ENCODE measurements at regions of chr1 and their contacts with region 1.

Region 1: GRCh38 chr1:226062558-226063223 is at the start of gene H3-3A:
- DNase-seq: peak; percentile 97
- ATAC-seq: peak; percentile 87
- H3K4me3 Mint-ChIP-seq: peak within 1 kb of the TSS; percentile 99
- H3K27ac Mint-ChIP-seq: peak within 1 kb of the TSS; percentile 100
- H3K4me1 Mint-ChIP-seq: peaks cover 33% of the 10 kb centered on the region
- H3K27me3 Mint-ChIP-seq: no peaks in the 10 kb centered on the region
- total RNA-seq, gene H3-3A: 384 to 451 TPM

Region 2: DNA sequence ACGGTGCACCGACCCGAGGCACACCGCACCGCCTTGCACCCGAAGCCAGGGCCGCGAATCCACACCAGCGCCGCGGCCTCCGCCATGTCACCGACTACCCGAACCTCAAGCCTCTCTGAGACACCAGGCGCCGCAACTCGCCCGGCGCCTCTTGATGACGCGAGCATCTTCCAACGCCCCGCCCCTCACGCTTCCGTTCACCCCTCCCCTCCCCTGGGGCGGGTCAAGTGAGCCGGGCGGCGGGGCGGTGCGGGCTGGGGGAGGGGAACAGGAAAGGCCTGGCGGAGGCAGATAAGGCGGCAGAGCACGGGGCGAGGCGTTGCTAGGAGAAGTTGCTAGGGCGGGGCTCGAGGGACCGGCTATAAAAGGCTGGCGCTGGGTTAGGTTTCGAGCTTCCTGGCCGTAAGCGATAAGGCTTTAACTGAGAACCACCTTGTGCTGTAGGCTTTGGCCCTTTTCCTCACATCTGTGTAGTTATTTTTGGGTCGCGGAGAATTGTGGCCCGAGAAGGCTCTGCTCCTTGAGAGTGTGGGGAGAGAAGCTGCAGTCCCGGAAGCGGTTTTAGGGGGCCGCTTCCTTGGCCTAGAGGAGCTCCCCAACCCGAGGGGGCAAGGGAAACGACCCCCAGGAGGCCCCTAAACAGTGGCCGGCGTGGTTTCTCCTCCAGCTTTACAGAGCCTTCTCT is 63.3 kb before region 1 on chr1 and contains the start of gene SDE2:
- CTCF ChIA-PET with region 1: interaction called, 12 read pairs
- DNase-seq: peak; percentile 100
- ATAC-seq: peak; percentile 89
- H3K4me3 Mint-ChIP-seq: peak within 1 kb of the TSS; percentile 98
- H3K27ac Mint-ChIP-seq: peak within 1 kb of the TSS; percentile 100
- H3K4me1 Mint-ChIP-seq: peaks cover 66% of the 10 kb centered on the region
- H3K27me3 Mint-ChIP-seq: no peaks in the 10 kb centered on the region
- total RNA-seq, gene SDE2: 16.6 to 20.9 TPM

Region 3: DNA sequence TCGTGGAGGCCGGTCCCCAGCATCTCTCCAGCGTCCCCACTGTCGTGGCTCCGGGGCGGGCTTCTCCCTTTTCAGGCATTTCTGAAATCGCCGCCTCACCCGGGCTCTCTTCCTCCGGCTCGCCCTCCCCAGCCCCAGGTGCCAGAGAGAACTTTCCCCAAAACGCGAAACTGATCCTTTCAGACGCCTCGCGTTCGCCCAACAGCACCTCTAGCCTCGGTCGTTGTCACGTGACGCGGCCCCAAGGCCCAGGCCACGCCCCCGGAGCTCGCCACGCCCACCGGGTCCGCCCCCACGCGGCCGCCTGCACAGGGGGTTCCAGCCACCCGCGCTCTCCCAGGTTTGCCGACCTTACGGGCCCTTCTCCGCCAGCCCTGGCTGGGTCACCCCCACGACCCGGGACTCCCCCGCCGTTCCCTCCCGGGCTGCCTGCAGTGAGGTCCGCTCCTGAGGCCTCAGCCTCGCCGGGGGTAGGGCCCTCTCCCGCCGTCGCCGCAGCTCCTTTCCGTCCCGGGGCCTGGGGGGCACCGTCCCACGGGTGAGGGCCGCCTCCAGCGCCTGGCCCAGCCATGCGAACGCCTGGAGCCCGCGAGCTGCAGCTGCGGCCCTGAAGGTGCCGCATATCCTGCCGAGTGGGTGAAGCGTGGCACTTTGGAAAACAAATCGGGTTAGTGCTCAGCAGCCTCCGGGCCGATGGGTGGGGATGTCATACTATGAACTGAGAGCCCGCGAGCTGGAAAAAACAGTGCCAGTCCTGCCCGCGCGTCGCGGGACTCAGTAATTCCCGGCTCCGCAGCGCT is 20.8 kb after region 1 on chr1:
- CTCF ChIA-PET with region 1: interaction called, 83 read pairs
- DNase-seq: peak; percentile 93
- ATAC-seq: peak; percentile 96
- H3K4me3 Mint-ChIP-seq: peak overlapping the region; percentile 75
- H3K27ac Mint-ChIP-seq: peak overlapping the region; percentile 66
- H3K4me1 Mint-ChIP-seq: peaks cover 9% of the 10 kb centered on the region
- H3K27me3 Mint-ChIP-seq: peaks cover 12% of the 10 kb centered on the region

Region 4: GRCh38 chr1:226109829-226110248 is 47.1 kb after region 1 on chr1:
- CTCF ChIA-PET with region 1: interaction called, 35 read pairs
- DNase-seq: peak; percentile 88
- ATAC-seq: peak; percentile 87
- H3K4me3 Mint-ChIP-seq: peak overlapping the region; percentile 78
- H3K27ac Mint-ChIP-seq: peak overlapping the region; percentile 73
- H3K4me1 Mint-ChIP-seq: peaks cover 13% of the 10 kb centered on the region
- H3K27me3 Mint-ChIP-seq: no peaks in the 10 kb centered on the region

Region 5: DNA sequence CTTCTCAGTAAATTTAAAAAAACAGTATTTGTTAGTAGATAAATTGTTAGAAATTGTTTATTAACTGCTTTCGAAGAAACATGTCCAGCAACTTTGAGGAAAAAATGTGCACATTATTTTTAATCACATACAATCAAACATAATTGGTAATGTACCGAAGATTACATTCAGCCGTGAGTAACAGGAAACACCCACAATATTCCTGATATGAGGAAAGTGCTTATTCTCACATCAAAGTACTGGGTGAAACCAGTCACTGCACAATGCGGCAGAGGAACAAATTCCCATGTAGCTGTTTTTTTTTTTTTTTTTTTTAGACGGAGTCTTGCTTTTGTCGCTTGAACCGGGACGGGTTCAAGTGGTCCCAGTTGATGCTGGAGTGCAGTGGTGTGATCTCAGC is 114.2 kb after region 1 on chr1:
- CTCF ChIA-PET with region 1: no interaction called
- DNase-seq: no peak
- ATAC-seq: no peak
- H3K4me3 Mint-ChIP-seq: no peak overlapping the region
- H3K27ac Mint-ChIP-seq: no peak overlapping the region
- H3K4me1 Mint-ChIP-seq: peaks cover 22% of the 10 kb centered on the region
- H3K27me3 Mint-ChIP-seq: no peaks in the 10 kb centered on the region

Measured in activated CD8-positive, alpha-beta memory T cell treated with anti-CD3 and anti-CD28 coated beads, Interleukin-2, amount 10 ng/mL, durations not matched to agents 7 days and 5 days (primary cell).